B cell (primary cell): ENCODE measurements at regions of chr12 and their contacts with region 1.

Region 1: GRCh38 chr12:124493809-124494750 is 73.3 kb downstream of the NCOR2 start:
- DNase-seq: peak; percentile 75
- ATAC-seq: peak; percentile 89
- H3K4me3 ChIP-seq: peak overlapping the region in 1 of 5 experiments; percentile 7
- H3K4me3 Mint-ChIP-seq: peak overlapping the region; percentile 83
- H3K27ac ChIP-seq: peak overlapping the region; percentile 32 to 75
- H3K27ac Mint-ChIP-seq: peak overlapping the region; percentile 86
- H3K4me1 ChIP-seq: peaks cover 33 to 69% of the 10 kb centered on the region in 2 donors
- H3K4me1 Mint-ChIP-seq: peaks cover 68% of the 10 kb centered on the region
- H3K27me3 ChIP-seq: no peaks in the 10 kb centered on the region
- H3K27me3 Mint-ChIP-seq: no peaks in the 10 kb centered on the region
- CTCF ChIP-seq: no peak

Region 2: DNA sequence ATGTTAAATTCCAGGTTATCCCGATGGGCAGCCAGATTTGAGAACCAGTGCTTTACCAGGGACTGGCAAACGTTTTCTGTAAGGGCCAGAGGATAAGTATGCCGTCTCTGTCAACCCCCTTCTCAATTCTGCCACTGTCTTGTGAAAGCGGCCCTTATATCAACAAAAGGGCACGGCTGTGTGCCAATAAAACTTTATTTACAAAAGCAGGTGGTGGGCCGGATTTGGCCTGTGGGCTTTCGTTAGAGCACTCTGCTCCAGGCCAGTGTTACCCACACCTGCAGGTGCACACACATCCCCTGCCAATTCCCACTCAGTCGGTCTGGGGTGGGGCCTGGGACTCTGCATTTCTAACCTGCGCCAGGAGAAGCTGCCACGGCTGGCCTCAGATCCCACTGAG is 88.0 kb before region 1 on chr12:
- CTCF ChIA-PET with region 1: no interaction called
- POLR2A ChIA-PET with region 1: no interaction called
- intact Hi-C with region 1: no loop called
- DNase-seq: no peak
- ATAC-seq: no peak
- H3K4me3 ChIP-seq: no peak overlapping the region
- H3K4me3 Mint-ChIP-seq: no peak overlapping the region
- H3K27ac ChIP-seq: no peak overlapping the region
- H3K27ac Mint-ChIP-seq: no peak overlapping the region
- H3K4me1 ChIP-seq: no peaks in the 10 kb centered on the region
- H3K4me1 Mint-ChIP-seq: peaks cover 2% of the 10 kb centered on the region
- H3K27me3 ChIP-seq: no peaks in the 10 kb centered on the region
- H3K27me3 Mint-ChIP-seq: no peaks in the 10 kb centered on the region
- CTCF ChIP-seq: no peak

Region 3: GRCh38 chr12:124512667-124513296 is 18.7 kb after region 1 on chr12:
- CTCF ChIA-PET with region 1: no interaction called
- POLR2A ChIA-PET with region 1: no interaction called
- intact Hi-C with region 1: no loop called
- DNase-seq: no peak
- ATAC-seq: no peak
- H3K4me3 ChIP-seq: no peak overlapping the region
- H3K4me3 Mint-ChIP-seq: no peak overlapping the region
- H3K27ac ChIP-seq: no peak overlapping the region
- H3K27ac Mint-ChIP-seq: no peak overlapping the region
- H3K4me1 ChIP-seq: peaks cover 0 to 5% of the 10 kb centered on the region in 2 donors
- H3K4me1 Mint-ChIP-seq: peaks cover 24% of the 10 kb centered on the region
- H3K27me3 ChIP-seq: no peaks in the 10 kb centered on the region
- H3K27me3 Mint-ChIP-seq: no peaks in the 10 kb centered on the region
- CTCF ChIP-seq: no peak

Region 4: GRCh38 chr12:124551268-124552144 is 57.4 kb after region 1 on chr12:
- CTCF ChIA-PET with region 1: no interaction called
- POLR2A ChIA-PET with region 1: no interaction called
- intact Hi-C with region 1: loop called (anchors 10 kb)
- DNase-seq: peak; percentile 66
- ATAC-seq: peak; percentile 63
- H3K4me3 ChIP-seq: peak overlapping the region in 1 of 5 experiments; percentile 29
- H3K4me3 Mint-ChIP-seq: peak overlapping the region; percentile 85
- H3K27ac ChIP-seq: peak overlapping the region; percentile 34 to 75
- H3K27ac Mint-ChIP-seq: peak overlapping the region; percentile 93
- H3K4me1 ChIP-seq: peaks cover 41 to 68% of the 10 kb centered on the region in 2 donors
- H3K4me1 Mint-ChIP-seq: peaks cover 77% of the 10 kb centered on the region
- H3K27me3 ChIP-seq: no peaks in the 10 kb centered on the region
- H3K27me3 Mint-ChIP-seq: no peaks in the 10 kb centered on the region
- CTCF ChIP-seq: no peak